ENCODE measurements at regions of chr3 and their contacts with region 1.

Region 1: DNA sequence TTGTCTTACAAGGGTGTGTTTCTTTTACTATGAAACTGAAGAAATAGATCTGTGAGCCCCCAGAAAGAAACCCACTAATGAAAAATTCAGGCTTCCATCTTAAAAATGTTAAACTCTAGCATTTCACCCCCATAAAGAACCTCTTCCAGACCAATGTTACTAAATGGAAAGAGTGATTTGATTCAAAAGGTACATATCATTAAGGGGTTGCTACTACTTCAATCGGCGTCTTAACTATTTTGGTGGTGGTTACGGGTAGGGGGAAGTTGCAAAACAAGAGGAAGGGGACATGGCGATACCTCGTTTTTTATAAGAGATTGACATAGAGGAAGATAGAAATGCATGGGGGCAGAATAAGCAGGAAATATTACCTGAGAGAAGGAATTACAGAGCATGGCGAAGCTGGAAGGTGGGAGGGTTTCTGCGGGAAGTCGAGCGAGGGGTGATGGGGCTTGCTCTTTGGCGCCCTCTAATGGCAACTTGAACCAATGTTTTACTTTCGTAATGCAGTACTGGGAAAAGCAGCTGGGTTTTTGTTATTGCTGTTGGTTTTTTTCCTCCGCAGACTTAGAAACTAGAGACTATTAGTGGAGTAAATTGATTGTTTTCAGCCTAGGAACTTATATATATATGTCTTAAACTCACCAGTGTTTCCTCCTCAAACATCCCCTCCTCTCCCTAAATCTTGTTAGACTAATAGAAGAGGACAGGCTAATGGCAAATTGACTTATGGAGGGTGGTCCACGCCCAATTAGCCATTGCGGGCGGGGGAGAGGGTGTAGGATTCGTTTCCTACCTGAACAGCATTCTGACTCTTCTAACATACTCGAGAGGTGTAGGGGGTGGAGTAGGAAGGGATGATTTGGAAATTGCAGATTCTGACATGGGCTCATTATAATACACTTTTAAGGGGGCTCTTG is 11.3 kb upstream of the SOX2 start:
- DNase-seq: peak in 5 of 6 donors; percentile 46 to 64 (median 54)
- ATAC-seq: peak; percentile 80 to 89 (median 86)
- H3K4me3 ChIP-seq: no peak overlapping the region
- H3K27ac ChIP-seq: no peak overlapping the region
- H3K4me1 ChIP-seq: peaks cover 0 to 4% (median 3%) of the 10 kb centered on the region in 3 donors
- H3K27me3 ChIP-seq: peaks cover 15 to 87% (median 21%) of the 10 kb centered on the region in 4 donors
- CTCF ChIP-seq: peak; percentile 66 to 91 (median 78)

Region 2: GRCh38 chr3:182671942-182672341 is 971.5 kb after region 1 on chr3:
- intact Hi-C with region 1: loop called in 1 of 3 experiments (anchors 10 kb)
- DNase-seq: no peak
- ATAC-seq: no peak
- H3K4me3 ChIP-seq: no peak overlapping the region
- H3K27ac ChIP-seq: no peak overlapping the region
- H3K4me1 ChIP-seq: no peaks in the 10 kb centered on the region
- H3K27me3 ChIP-seq: peaks cover 0 to 13% (median 0%) of the 10 kb centered on the region in 4 donors
- CTCF ChIP-seq: no peak

Region 3: DNA sequence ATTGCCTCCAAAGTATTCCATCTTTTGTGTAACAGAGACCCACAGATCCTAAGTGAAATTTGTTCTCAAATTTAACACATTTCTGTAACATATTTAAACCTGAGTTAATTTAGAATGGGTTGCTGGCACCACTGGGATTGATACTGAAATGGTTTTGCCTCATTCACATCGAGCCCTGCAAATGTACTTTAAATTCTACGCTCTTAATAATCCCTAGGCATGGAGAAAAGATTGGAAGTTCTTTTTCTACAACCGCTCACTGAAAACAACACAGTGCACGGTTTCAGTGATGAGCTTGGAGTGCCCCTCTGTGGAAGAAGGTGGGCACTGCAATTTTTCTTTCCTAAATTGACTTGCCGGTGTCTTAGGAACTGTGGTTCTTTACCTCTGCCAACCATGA is 983.0 kb after region 1 on chr3:
- intact Hi-C with region 1: loop called (anchors 5 to 10 kb)
- DNase-seq: peak in 4 of 6 donors; percentile 32 to 76 (median 47)
- ATAC-seq: peak; percentile 89 to 96 (median 96)
- H3K4me3 ChIP-seq: peak overlapping the region in 1 of 4 donors; percentile 60
- H3K27ac ChIP-seq: no peak overlapping the region
- H3K4me1 ChIP-seq: peaks cover 0 to 9% (median 4%) of the 10 kb centered on the region in 3 donors
- H3K27me3 ChIP-seq: peaks cover 0 to 25% (median 7%) of the 10 kb centered on the region in 4 donors
- CTCF ChIP-seq: peak; percentile 49 to 87 (median 72)